ENCODE measurements at regions of chr15 and their contacts with region 1.

Region 1: DNA sequence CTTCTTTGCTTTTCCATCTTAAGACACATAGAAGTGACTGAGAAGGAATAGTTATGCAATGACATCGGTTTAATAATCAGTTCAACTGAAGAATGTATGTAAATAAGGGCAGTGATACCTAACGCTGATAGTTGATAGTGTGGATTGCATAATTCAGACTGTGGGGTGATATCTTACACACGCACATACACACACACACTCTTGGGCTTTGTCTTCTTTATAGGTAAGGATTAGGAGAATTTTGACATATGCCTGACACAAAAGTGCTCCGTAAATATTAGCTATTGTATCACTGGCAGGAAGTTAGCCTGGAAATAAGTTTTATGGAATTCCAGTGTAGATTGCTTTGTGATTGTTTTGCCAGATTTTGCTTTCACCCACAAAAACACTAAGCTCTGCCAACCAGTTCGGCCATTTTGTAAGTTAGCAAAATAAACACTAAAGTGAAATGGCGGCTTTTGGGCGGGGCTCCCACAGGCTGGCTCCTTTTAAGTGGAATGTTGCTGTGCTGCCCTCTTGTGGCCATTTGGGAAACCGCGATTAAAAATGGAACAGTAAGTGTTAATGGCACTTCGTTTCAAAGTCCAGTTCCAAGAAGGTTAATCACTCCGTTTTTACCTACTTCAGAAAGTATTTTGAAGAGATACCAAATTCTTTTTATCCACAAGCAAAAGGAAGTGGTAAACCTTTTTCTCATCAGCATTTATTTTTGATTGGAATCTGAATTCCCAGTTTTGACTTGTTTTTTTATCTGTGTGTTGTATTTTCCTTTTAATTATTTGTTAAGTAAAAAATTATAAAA is 17.7 kb downstream of the CHD2 start:
- DNase-seq: peak; percentile 87 to 91 (median 89)
- H3K4me3 ChIP-seq: no peak overlapping the region
- H3K4me3 Mint-ChIP-seq: peak overlapping the region; percentile 54 to 79 (median 62)
- H3K27ac ChIP-seq: peak overlapping the region; percentile 82
- H3K27ac Mint-ChIP-seq: peak overlapping the region; percentile 90 to 100 (median 96)
- H3K4me1 ChIP-seq: peaks cover 97% of the 10 kb centered on the region
- H3K4me1 Mint-ChIP-seq: peaks cover 72 to 90% (median 80%) of the 10 kb centered on the region in 4 donors
- H3K27me3 ChIP-seq: no peaks in the 10 kb centered on the region
- H3K27me3 Mint-ChIP-seq: no peaks in the 10 kb centered on the region

Region 2: DNA sequence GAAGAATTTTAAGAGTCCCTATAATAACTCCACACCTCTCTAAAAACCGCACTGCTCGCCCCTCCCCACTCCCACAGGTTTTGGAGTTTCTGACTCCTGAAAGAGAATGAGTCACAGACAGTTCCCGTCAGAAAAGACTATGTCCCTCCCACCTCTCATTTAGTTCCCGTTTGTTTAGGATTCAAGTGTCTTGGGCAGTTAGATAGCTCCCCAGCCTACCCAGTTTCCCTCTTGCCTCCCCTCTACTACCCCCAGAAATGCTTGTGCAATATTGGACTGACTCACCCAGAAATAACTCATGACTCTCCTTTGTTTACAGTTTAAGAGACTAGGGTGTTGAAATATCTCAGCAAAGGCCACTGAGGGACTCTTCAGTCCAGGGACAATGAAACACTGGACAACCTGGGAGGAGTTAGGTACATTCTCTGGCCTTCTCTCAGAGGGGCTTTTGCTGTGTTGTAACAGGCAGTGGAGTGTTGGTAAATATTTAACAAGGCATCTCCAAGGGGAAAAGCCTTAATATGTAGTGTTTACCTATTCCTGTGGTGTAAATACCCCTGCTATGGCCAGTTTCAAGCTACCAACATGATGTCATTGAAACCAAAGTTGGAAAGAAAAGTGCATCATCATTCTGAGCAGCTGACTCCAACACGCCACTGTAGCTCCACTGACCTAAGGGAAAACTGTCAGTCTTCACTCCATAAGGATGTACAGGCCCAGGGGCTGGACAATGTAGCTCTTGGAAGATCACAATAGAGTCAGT is 113.8 kb before region 1 on chr15:
- CTCF ChIA-PET with region 1: interaction called, 205 read pairs
- POLR2A ChIA-PET with region 1: interaction called, 295 read pairs
- intact Hi-C with region 1: loop called (anchors 1 kb)
- DNase-seq: peak in 1 of 5 donors; percentile 61
- H3K4me3 ChIP-seq: no peak overlapping the region
- H3K4me3 Mint-ChIP-seq: peak overlapping the region in 2 of 8 donors; percentile 30 to 33
- H3K27ac ChIP-seq: no peak overlapping the region
- H3K27ac Mint-ChIP-seq: peak overlapping the region; percentile 0 to 86 (median 54)
- H3K4me1 ChIP-seq: peaks cover 22% of the 10 kb centered on the region
- H3K4me1 Mint-ChIP-seq: peaks cover 14 to 29% (median 21%) of the 10 kb centered on the region in 4 donors
- H3K27me3 ChIP-seq: no peaks in the 10 kb centered on the region
- H3K27me3 Mint-ChIP-seq: no peaks in the 10 kb centered on the region

Region 3: DNA sequence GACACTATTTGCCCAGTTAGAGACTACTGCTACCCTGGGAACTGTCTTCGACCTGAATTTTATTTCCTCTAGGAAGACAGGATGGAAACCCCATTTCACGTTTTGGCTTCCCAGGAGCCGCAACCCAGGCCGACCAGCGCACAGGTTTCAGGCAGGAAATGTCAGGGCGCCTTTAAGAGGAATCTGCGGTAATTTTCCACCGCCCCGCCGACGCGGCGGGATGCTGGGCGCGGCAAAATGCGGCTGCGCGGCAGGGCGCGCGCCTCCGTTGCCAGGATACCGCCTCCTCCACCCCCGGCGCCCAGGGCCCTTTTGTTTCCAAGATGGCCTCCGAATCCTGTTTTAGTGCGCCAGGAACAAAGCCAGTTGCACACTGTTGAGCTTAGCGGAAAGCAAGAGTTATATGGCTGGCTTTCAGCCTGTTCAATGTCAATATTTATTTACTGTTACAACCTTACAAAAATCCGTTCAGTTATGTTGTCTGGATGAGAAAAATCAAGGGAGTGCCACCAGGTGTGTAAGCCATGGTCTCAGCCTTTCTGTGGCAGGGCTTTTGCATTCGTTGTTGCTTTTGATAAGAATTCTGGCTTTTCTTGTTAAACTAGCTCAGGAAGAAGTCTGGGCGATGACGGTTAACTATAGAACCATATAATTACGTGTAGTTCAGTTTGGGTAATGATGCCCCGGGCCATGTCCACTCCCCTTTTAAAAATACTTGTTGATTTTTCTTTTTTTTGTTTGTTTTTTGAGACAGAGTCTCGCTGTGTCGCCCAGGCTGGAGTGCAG is 97.4 kb before region 1 on chr15:
- CTCF ChIA-PET with region 1: interaction called, 7 read pairs
- POLR2A ChIA-PET with region 1: interaction called, 16 read pairs
- intact Hi-C with region 1: no loop called
- DNase-seq: peak; percentile 87 to 89 (median 88)
- H3K4me3 ChIP-seq: peak overlapping the region; percentile 79 to 86
- H3K4me3 Mint-ChIP-seq: peak overlapping the region; percentile 74 to 93 (median 91)
- H3K27ac ChIP-seq: peak overlapping the region; percentile 74
- H3K27ac Mint-ChIP-seq: peak overlapping the region; percentile 97 to 99 (median 99)
- H3K4me1 ChIP-seq: peaks cover 67% of the 10 kb centered on the region
- H3K4me1 Mint-ChIP-seq: peaks cover 40 to 65% (median 54%) of the 10 kb centered on the region in 4 donors
- H3K27me3 ChIP-seq: no peaks in the 10 kb centered on the region
- H3K27me3 Mint-ChIP-seq: no peaks in the 10 kb centered on the region

Region 4: DNA sequence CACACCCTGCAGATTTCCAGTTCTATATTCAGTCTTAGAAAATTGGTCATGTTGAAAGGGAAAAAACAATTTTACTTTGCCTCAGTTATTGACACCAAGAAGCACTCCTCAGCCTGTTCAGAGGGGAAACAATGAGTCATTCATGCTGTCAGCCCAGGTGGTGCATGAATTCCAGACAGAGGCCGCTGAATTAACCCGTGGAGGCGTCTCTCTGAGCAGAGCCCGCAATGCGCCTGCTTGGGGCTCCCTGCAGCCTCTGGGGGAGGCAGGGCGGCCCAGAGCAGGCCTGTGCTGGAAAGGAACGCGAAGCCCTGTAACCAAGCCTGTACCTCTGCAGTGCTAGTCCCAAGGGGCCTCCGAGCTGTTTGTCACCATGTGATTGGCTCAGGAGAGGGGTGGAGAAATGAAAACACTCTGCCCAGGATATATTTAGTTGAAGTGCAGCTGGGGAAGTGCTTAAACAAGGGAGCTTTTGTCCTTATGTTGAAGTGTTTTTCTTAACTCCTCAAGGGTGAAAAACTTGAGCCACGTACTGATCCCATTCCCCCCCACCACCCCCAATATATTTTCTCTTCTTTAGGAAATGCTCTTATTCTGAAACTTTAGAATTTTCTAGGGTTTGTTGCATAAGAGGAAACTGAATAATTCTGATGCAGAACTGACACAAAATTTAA is 86.0 kb before region 1 on chr15:
- CTCF ChIA-PET with region 1: interaction called, 9 read pairs
- POLR2A ChIA-PET with region 1: interaction called, 46 read pairs
- intact Hi-C with region 1: loop called (anchors 1 kb)
- DNase-seq: peak; percentile 80 to 98 (median 89)
- H3K4me3 ChIP-seq: peak overlapping the region; percentile 27 to 34
- H3K4me3 Mint-ChIP-seq: peak overlapping the region; percentile 69 to 91 (median 80)
- H3K27ac ChIP-seq: peak overlapping the region; percentile 66
- H3K27ac Mint-ChIP-seq: peak overlapping the region; percentile 93 to 99 (median 95)
- H3K4me1 ChIP-seq: peaks cover 47% of the 10 kb centered on the region
- H3K4me1 Mint-ChIP-seq: peaks cover 29 to 44% (median 38%) of the 10 kb centered on the region in 4 donors
- H3K27me3 ChIP-seq: no peaks in the 10 kb centered on the region
- H3K27me3 Mint-ChIP-seq: peaks cover 0 to 1% of the 10 kb centered on the region in 2 donors

Region 5: DNA sequence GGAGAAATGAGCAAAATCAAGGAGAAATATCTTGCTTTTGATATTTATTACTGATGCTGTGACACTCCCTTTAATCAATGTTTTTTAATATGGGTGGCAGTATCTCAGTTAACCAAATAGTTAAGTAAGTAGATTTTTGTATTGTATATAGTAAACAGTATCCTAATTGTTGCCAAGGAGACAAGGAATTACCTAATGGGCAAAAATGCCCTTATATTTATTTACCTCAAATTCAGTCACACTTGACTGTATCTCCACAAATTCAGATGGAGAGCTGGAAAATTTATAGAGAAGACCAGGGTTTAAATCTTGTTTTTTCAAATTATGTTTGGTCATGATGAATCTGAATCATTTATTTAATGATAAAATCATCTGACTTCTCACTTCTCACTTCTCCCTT is 21.2 kb before region 1 on chr15:
- CTCF ChIA-PET with region 1: interaction called, 24 read pairs
- POLR2A ChIA-PET with region 1: interaction called, 267 read pairs
- intact Hi-C with region 1: loop called (anchors 2 kb)
- DNase-seq: no peak
- H3K4me3 ChIP-seq: no peak overlapping the region
- H3K4me3 Mint-ChIP-seq: peak overlapping the region in 7 of 8 donors; percentile 22 to 79 (median 46)
- H3K27ac ChIP-seq: peak overlapping the region; percentile 55
- H3K27ac Mint-ChIP-seq: peak overlapping the region; percentile 73 to 98 (median 77)
- H3K4me1 ChIP-seq: peaks cover 84% of the 10 kb centered on the region
- H3K4me1 Mint-ChIP-seq: peaks cover 47 to 84% (median 64%) of the 10 kb centered on the region in 4 donors
- H3K27me3 ChIP-seq: no peaks in the 10 kb centered on the region
- H3K27me3 Mint-ChIP-seq: no peaks in the 10 kb centered on the region

Region 6: DNA sequence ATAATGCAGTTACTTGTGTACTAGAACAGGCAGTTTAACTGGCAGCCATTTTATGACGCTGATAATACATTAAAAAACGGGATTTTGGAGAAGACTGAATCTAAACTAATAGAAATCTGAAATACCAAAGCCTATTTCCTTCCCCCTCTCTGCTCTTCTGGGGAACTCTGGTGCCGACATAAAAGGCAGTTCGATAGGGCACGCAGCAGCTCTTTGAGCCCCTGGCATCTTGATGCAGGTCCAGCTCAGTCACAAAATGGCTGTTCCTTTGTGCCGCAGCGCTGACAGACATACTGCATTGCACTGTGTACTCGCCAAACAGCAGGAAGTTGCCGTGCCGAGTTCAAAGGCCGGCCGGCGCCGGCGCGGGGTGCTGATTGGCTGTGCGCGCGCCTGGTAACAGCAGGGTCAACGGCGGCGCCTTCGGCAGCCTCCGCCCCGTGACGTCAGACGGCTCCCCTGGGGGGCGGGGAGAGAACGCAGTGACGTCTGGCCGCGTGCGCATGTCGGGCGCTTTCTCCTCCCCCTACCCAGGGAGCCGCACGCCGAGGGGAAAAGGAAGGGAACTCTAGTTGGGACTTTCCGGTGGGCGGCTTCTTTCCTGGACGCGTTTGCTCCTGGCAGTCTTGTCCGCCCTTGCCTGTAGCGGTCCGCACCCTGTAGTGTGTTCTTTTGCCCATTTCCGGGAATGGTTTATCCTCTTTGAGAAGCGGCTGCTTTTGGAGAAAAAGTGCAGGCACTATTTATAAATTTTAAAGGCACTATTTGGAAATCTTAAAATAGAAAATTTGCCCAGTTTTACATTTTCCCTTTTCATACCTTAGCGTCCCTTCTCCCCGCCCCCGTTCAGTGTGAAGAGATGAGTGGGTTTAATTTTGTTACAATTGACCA is 13.6 kb before region 1 on chr15:
- CTCF ChIA-PET with region 1: interaction called, 80 read pairs
- POLR2A ChIA-PET with region 1: interaction called, 267 read pairs
- intact Hi-C with region 1: loop called (anchors 1 kb)
- DNase-seq: peak; percentile 99
- H3K4me3 ChIP-seq: peak overlapping the region; percentile 67 to 75
- H3K4me3 Mint-ChIP-seq: peak overlapping the region; percentile 94 to 99 (median 98)
- H3K27ac ChIP-seq: peak overlapping the region; percentile 95
- H3K27ac Mint-ChIP-seq: peak overlapping the region; percentile 98 to 100 (median 100)
- H3K4me1 ChIP-seq: peaks cover 71% of the 10 kb centered on the region
- H3K4me1 Mint-ChIP-seq: peaks cover 50 to 78% (median 63%) of the 10 kb centered on the region in 4 donors
- H3K27me3 ChIP-seq: no peaks in the 10 kb centered on the region
- H3K27me3 Mint-ChIP-seq: no peaks in the 10 kb centered on the region

Region 7: DNA sequence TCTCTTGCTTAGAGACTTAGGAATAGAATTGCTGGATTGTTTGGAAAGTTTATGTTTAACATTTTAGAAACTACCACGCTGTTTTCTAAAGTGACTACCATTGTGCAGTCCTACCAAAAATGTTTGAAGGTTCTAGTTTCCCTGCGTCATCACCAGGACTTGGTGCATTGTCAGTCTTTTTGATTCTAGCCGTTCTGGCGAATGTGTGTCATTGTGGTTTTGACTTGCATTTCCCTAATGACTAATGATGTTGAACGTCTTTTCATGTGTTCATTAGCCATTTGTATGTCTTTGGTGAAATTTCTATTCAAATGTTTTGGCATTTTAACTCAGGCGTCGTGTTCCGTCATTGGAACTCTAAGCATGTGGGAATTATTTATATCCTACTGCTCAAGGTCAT is 40.3 kb after region 1 on chr15:
- CTCF ChIA-PET with region 1: no interaction called
- POLR2A ChIA-PET with region 1: no interaction called
- intact Hi-C with region 1: loop called (anchors 5 kb)
- DNase-seq: peak; percentile 54 to 88 (median 67)
- H3K4me3 ChIP-seq: no peak overlapping the region
- H3K4me3 Mint-ChIP-seq: peak overlapping the region in 6 of 8 donors; percentile 1 to 68 (median 40)
- H3K27ac ChIP-seq: peak overlapping the region; percentile 32
- H3K27ac Mint-ChIP-seq: peak overlapping the region; percentile 65 to 93 (median 84)
- H3K4me1 ChIP-seq: peaks cover 41% of the 10 kb centered on the region
- H3K4me1 Mint-ChIP-seq: peaks cover 31 to 57% (median 46%) of the 10 kb centered on the region in 4 donors
- H3K27me3 ChIP-seq: no peaks in the 10 kb centered on the region
- H3K27me3 Mint-ChIP-seq: no peaks in the 10 kb centered on the region

Region 8: GRCh38 chr15:93179072-93179471 is 261.3 kb after region 1 on chr15:
- CTCF ChIA-PET with region 1: no interaction called
- POLR2A ChIA-PET with region 1: no interaction called
- intact Hi-C with region 1: no loop called
- DNase-seq: no peak
- H3K4me3 ChIP-seq: no peak overlapping the region
- H3K4me3 Mint-ChIP-seq: no peak overlapping the region
- H3K27ac ChIP-seq: no peak overlapping the region
- H3K27ac Mint-ChIP-seq: no peak overlapping the region
- H3K4me1 ChIP-seq: peaks cover 5% of the 10 kb centered on the region
- H3K4me1 Mint-ChIP-seq: peaks cover 0 to 1% (median 0%) of the 10 kb centered on the region in 4 donors
- H3K27me3 ChIP-seq: no peaks in the 10 kb centered on the region
- H3K27me3 Mint-ChIP-seq: peaks cover 7 to 11% of the 10 kb centered on the region in 2 donors

Measured in CD4-positive, alpha-beta memory T cell (primary cell).